ENCODE measurements at regions of chr9 and their contacts with region 1.

Region 1: GRCh38 chr9:73137286-73137899 is 14.3 kb upstream of the ANXA1 start:
- DNase-seq: no peak
- ATAC-seq: peak; percentile 79
- H3K4me3 ChIP-seq: peak overlapping the region in 1 of 2 experiments; percentile 8; a peak in 1 of 4 replicates
- H3K27ac ChIP-seq: peak overlapping the region; percentile 11; the same call in 1 of the 2 replicates
- H3K4me1 ChIP-seq: peaks cover 35 to 40% of the 10 kb centered on the region in 2 experiments
- H3K27me3 ChIP-seq: no peaks in the 10 kb centered on the region
- CTCF ChIP-seq: no peak
- POLR2A ChIP-seq: no peak
- RAD21 ChIP-seq: peak; percentile 22; the same call in 1 of the 2 replicates

Region 2: DNA sequence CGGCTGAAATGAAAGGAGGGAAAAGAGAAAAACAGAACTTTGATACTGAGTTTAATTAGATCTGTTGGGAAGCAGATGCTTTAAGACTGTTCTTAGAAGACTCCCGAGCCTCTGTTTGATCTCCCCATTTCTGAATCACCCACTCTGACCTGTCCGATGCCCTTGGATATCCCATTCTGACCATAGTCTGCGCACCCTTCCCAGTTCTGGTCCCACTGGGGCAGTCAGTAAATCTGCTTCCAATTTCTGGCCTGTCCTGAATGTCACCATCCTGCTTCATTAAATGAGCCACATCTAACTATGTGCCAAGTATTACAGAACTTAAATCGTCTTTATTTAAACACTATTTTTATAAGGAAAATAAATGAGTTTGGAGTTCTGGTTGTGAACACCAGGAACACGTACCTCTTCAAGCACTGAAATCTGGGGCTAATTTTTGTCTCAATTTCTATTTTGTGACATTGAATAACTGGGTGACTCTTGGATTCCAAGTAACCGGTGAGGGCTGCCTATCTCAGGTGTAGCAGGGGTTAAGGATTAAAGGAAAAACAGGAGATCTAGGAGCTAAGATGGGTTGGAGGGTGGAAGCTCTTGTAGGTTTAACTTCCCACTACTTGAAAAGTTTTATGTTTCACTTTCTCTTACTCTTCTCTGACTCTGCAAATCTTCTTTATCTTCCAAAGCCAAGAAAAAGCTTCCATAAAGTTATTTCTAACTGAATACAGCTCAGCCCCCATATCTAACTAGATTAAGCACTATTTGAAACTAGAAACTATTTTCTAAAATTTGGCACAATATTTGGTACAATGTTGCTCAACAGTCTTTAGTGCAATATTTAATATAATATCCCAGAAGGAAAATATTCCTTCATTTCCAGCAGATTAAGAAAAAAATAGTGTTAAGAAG is 224.7 kb before region 1 on chr9:
- CTCF ChIA-PET with region 1: no interaction called
- POLR2A ChIA-PET with region 1: no interaction called
- RAD21 ChIA-PET with region 1: no interaction called
- intact Hi-C with region 1: no loop called
- DNase-seq: no peak
- ATAC-seq: no peak
- H3K4me3 ChIP-seq: no peak overlapping the region
- H3K27ac ChIP-seq: no peak overlapping the region
- H3K4me1 ChIP-seq: no peaks in the 10 kb centered on the region
- H3K27me3 ChIP-seq: no peaks in the 10 kb centered on the region
- CTCF ChIP-seq: no peak
- POLR2A ChIP-seq: no peak
- RAD21 ChIP-seq: no peak

Region 3: GRCh38 chr9:73149371-73150067 is 12.1 kb after region 1 on chr9:
- CTCF ChIA-PET with region 1: no interaction called
- POLR2A ChIA-PET with region 1: interaction called, 12 read pairs
- RAD21 ChIA-PET with region 1: no interaction called
- intact Hi-C with region 1: no loop called
- DNase-seq: peak; percentile 69
- ATAC-seq: peak; percentile 45
- H3K4me3 ChIP-seq: peak overlapping the region in 1 of 2 experiments; percentile 40; a peak in 2 of 4 replicates
- H3K27ac ChIP-seq: peak overlapping the region; percentile 95
- H3K4me1 ChIP-seq: peaks cover 54 to 74% of the 10 kb centered on the region in 2 experiments
- H3K27me3 ChIP-seq: no peaks in the 10 kb centered on the region
- CTCF ChIP-seq: no peak
- POLR2A ChIP-seq: no peak
- RAD21 ChIP-seq: peak; percentile 16; the same call in 1 of the 2 replicates

Region 4: GRCh38 chr9:73327149-73327548 is 189.8 kb after region 1 on chr9:
- CTCF ChIA-PET with region 1: no interaction called
- POLR2A ChIA-PET with region 1: no interaction called
- RAD21 ChIA-PET with region 1: no interaction called
- intact Hi-C with region 1: no loop called
- DNase-seq: no peak
- ATAC-seq: no peak
- H3K4me3 ChIP-seq: no peak overlapping the region
- H3K27ac ChIP-seq: no peak overlapping the region
- H3K4me1 ChIP-seq: no peaks in the 10 kb centered on the region
- H3K27me3 ChIP-seq: peaks cover 6% of the 10 kb centered on the region; the same call in 1 of the 2 replicates
- CTCF ChIP-seq: no peak
- POLR2A ChIP-seq: no peak
- RAD21 ChIP-seq: no peak

Region 5: GRCh38 chr9:73583576-73583975 is 446.2 kb after region 1 on chr9:
- CTCF ChIA-PET with region 1: no interaction called
- POLR2A ChIA-PET with region 1: no interaction called
- RAD21 ChIA-PET with region 1: no interaction called
- intact Hi-C with region 1: no loop called
- DNase-seq: no peak
- ATAC-seq: no peak
- H3K4me3 ChIP-seq: no peak overlapping the region
- H3K27ac ChIP-seq: no peak overlapping the region
- H3K4me1 ChIP-seq: no peaks in the 10 kb centered on the region
- H3K27me3 ChIP-seq: peaks cover 7% of the 10 kb centered on the region
- CTCF ChIP-seq: no peak
- POLR2A ChIP-seq: no peak
- RAD21 ChIP-seq: no peak